ENCODE measurements at regions of chr1 and their contacts with region 1.

Region 1: GRCh38 chr1:84427520-84428188 is 29.4 kb downstream of the DNASE2B start:
- DNase-seq: no peak
- ATAC-seq: no peak
- H3K4me3 ChIP-seq: no peak overlapping the region
- H3K27ac ChIP-seq: no peak overlapping the region
- H3K4me1 ChIP-seq: no peaks in the 10 kb centered on the region
- H3K27me3 ChIP-seq: no peaks in the 10 kb centered on the region
- CTCF ChIP-seq: no peak

Region 2: GRCh38 chr1:83998498-83999315 is 428.9 kb before region 1 on chr1 and contains the start of gene TTLL7:
- intact Hi-C with region 1: no loop called
- DNase-seq: peak; percentile 79 to 83
- ATAC-seq: peak; percentile 93 to 98 (median 95)
- H3K4me3 ChIP-seq: peak within 1 kb of the TSS; percentile 63 to 93 (median 84)
- H3K27ac ChIP-seq: peak within 1 kb of the TSS in 9 of 10 donors; percentile 61 to 86 (median 80)
- H3K4me1 ChIP-seq: peaks cover 0 to 32% (median 3%) of the 10 kb centered on the region in 9 donors
- H3K27me3 ChIP-seq: peaks cover 0 to 44% (median 7%) of the 10 kb centered on the region in 7 donors
- CTCF ChIP-seq: no peak
- total RNA-seq, gene TTLL7: 2.1 to 12.1 (median 3.7) TPM

Region 3: DNA sequence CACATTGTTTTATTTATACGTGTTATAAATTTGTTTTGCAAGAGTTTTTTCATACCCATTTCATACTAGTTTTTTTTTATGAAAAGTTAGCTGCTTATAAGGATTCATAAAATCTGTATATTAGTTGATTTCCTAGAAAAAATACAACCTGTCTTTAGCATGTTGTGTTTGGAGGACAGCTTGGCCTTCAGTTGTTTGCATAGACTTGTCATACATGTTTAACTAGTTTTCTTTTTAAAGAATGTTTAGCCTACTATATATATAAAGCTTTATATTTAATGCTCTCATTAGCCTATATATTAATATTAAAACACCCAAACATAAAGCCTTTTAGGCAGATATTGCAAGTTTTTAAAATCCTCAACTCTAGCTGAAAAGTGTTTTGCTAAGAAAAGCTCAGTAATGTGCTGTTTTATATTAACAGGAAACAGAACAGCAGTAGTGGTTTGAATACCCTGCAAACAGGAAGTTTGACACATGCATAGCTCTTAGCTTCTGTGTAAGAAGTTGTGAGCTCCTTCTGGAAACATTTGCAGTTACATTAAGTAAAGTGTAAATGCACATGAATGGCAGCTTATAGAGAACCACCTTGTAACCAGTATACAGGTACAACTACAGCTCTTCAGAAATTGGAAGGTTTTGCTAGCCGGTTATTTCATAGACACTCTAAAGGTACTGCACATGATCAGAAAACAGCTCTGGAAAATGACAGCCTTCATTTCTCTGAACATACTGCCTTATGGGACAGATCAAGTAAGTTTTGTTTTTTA is 283.7 kb before region 1 on chr1 and contains the start of gene PRKACB:
- intact Hi-C with region 1: loop called in 6 of 10 experiments (anchors 5 to 10 kb)
- DNase-seq: no peak
- ATAC-seq: peak in 5 of 8 donors; percentile 28 to 58 (median 50)
- H3K4me3 ChIP-seq: peak within 1 kb of the TSS in 5 of 10 donors; percentile 6 to 50 (median 13)
- H3K27ac ChIP-seq: peak within 1 kb of the TSS in 1 of 10 donors; percentile 78
- H3K4me1 ChIP-seq: peaks cover 0 to 29% (median 0%) of the 10 kb centered on the region in 9 donors
- H3K27me3 ChIP-seq: no peaks in the 10 kb centered on the region
- CTCF ChIP-seq: no peak
- total RNA-seq, gene PRKACB: 28.4 to 49.1 (median 43.0) TPM